ENCODE measurements at regions of chr3 and their contacts with region 1.

Region 1: GRCh38 chr3:53287131-53287629 is 31.4 kb upstream of the TKT start:
- DNase-seq: peak; percentile 76
- ATAC-seq: peak; percentile 85
- H3K4me3 ChIP-seq: no peak overlapping the region
- H3K27ac ChIP-seq: peak overlapping the region; percentile 43; the same call in 1 of the 2 replicates
- H3K4me1 ChIP-seq: peaks cover 6% of the 10 kb centered on the region
- H3K27me3 ChIP-seq: no peaks in the 10 kb centered on the region
- CTCF ChIP-seq: no peak
- POLR2A ChIP-seq: no peak
- RAD21 ChIP-seq: no peak

Region 2: DNA sequence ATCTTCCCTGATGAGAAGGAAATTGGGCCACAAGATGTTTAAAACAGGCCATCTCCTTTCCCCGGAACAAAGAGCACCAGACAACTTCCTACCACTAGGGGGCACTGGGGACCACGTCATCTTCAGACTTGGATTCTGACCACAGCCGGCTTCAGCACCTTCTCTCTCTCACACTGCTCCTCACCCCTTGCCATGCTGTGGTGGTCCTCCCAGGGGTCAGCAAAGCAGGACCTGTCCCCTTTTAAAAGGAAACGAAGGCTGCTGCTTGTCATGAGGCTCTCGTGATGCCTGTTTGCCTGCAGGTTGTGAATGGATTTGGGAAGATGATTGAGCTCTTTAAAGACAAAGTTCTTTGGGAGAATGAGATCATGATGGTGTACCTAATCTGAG is 173.2 kb before region 1 on chr3:
- CTCF ChIA-PET with region 1: no interaction called
- POLR2A ChIA-PET with region 1: no interaction called
- dilution Hi-C with region 1: no loop called
- in situ Hi-C with region 1: no loop called
- intact Hi-C with region 1: loop called (anchors 5 kb)
- DNase-seq: peak; percentile 78
- ATAC-seq: peak; percentile 90
- H3K4me3 ChIP-seq: no peak overlapping the region
- H3K27ac ChIP-seq: peak overlapping the region; percentile 8; the same call in 1 of the 2 replicates
- H3K4me1 ChIP-seq: peaks cover 12% of the 10 kb centered on the region
- H3K27me3 ChIP-seq: no peaks in the 10 kb centered on the region
- CTCF ChIP-seq: peak; percentile 92
- POLR2A ChIP-seq: no peak
- RAD21 ChIP-seq: peak; percentile 92

Measured in IMR-90 (cell line).